Activated CD4-positive, alpha-beta memory T cell treated with anti-CD3 and anti-CD28 coated beads, Interleukin-2, amount 10 ng/mL, durations not matched to agents 7 days and 5 days (primary cell): ENCODE measurements at regions of chr15 and their contacts with region 1.

Region 1: GRCh38 chr15:69452692-69453521 is at the start of gene RPLP1:
- DNase-seq: peak; percentile 96
- H3K4me3 Mint-ChIP-seq: peak within 1 kb of the TSS; percentile 90
- H3K27ac Mint-ChIP-seq: peak within 1 kb of the TSS; percentile 97
- H3K4me1 Mint-ChIP-seq: peaks cover 42% of the 10 kb centered on the region
- H3K27me3 Mint-ChIP-seq: no peaks in the 10 kb centered on the region
- total RNA-seq, gene RPLP1: 1,524 to 1,535 TPM

Region 2: DNA sequence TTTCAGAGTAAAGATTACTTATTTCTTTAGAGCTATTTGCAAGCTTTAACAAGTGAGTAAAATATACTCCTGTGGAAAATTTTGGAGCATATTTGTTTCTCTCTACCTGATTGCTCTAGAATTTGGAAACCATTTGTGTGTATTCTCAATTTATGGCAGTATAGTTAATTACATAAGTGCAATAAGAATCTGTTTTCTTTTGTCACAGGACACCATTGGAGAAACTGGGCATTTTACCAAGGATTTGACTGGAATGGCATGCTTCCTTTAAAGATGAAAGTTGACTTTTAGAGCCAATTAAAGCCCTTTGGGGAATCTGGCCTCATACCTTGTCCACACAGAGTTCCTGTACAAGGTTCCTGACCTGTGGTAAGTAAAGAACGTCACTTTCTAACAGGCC is 115.8 kb before region 1 on chr15:
- CTCF ChIA-PET with region 1: no interaction called
- POLR2A ChIA-PET with region 1: no interaction called
- DNase-seq: no peak
- H3K4me3 Mint-ChIP-seq: no peak overlapping the region
- H3K27ac Mint-ChIP-seq: no peak overlapping the region
- H3K4me1 Mint-ChIP-seq: peaks cover 5% of the 10 kb centered on the region
- H3K27me3 Mint-ChIP-seq: peaks cover 8% of the 10 kb centered on the region

Region 3: GRCh38 chr15:69413822-69414700 is 38.8 kb before region 1 on chr15 and contains the start of gene KIF23:
- CTCF ChIA-PET with region 1: interaction called, 3 read pairs
- POLR2A ChIA-PET with region 1: interaction called, 124 read pairs
- DNase-seq: peak; percentile 95
- H3K4me3 Mint-ChIP-seq: peak within 1 kb of the TSS; percentile 86
- H3K27ac Mint-ChIP-seq: peak within 1 kb of the TSS; percentile 65
- H3K4me1 Mint-ChIP-seq: peaks cover 36% of the 10 kb centered on the region
- H3K27me3 Mint-ChIP-seq: peaks cover 4% of the 10 kb centered on the region
- total RNA-seq, gene KIF23: 55.7 to 60.8 TPM

Region 4: GRCh38 chr15:69422336-69422895 is 30.5 kb before region 1 on chr15:
- CTCF ChIA-PET with region 1: no interaction called
- POLR2A ChIA-PET with region 1: interaction called, 124 read pairs
- DNase-seq: no peak
- H3K4me3 Mint-ChIP-seq: no peak overlapping the region
- H3K27ac Mint-ChIP-seq: no peak overlapping the region
- H3K4me1 Mint-ChIP-seq: peaks cover 7% of the 10 kb centered on the region
- H3K27me3 Mint-ChIP-seq: no peaks in the 10 kb centered on the region

Region 5: DNA sequence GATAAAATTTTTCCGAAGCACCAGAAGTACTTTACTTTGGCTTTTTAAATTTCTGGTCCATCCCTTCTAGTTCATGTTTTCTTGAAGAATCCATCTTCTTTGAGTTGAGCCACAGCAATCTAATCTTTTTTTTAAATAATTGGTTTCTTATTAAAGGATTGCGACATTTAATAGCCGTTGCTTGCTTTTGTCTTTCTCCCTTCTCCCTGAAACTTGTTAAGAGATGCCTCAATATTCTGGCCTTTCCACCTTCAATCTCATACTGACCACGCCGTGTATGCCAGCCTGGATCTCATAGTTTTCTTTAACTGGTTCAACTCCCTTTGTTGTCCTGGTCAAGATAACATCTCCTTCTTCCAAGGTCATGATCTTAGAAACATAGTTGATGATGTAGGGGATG is 18.7 kb before region 1 on chr15:
- CTCF ChIA-PET with region 1: interaction called, 6 read pairs
- POLR2A ChIA-PET with region 1: interaction called, 32 read pairs
- DNase-seq: no peak
- H3K4me3 Mint-ChIP-seq: no peak overlapping the region
- H3K27ac Mint-ChIP-seq: no peak overlapping the region
- H3K4me1 Mint-ChIP-seq: peaks cover under 1% of the 10 kb centered on the region
- H3K27me3 Mint-ChIP-seq: no peaks in the 10 kb centered on the region

Region 6: GRCh38 chr15:69468241-69469121 is 15.6 kb after region 1 on chr15:
- CTCF ChIA-PET with region 1: interaction called, 88 read pairs
- POLR2A ChIA-PET with region 1: interaction called, 141 read pairs
- DNase-seq: peak; percentile 88
- H3K4me3 Mint-ChIP-seq: peak overlapping the region; percentile 43
- H3K27ac Mint-ChIP-seq: peak overlapping the region; percentile 87
- H3K4me1 Mint-ChIP-seq: peaks cover 29% of the 10 kb centered on the region
- H3K27me3 Mint-ChIP-seq: peaks cover 33% of the 10 kb centered on the region